Caco-2 (cell line): ENCODE measurements at regions of chr12 and their contacts with region 1.

Region 1: DNA sequence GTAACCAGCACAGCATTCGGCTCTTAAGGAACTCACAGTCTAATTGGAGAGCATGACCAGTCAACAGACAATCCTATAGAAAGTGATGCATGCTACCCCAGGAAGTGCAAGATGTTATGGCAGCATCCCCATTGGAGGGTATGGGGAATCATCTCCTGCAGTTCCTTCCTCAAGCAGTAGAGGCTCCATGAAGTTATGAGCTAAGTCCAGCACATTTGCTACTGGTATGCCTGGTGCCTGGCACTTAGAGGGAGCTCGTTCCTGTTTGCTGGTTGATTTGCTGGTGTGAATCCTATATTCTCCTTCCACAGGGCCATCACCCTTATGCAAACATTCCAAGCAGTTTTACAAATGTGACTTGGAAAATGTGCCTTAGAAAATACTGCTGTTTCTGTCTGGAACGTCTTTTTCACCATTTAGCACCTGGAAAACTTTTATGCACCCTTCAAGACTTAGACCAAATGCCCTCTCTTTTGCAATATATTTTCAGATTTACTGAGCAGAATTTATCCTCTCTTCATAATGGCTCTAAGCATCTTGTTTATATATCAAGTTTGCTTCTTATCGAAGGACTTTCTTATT is 136.1 kb upstream of the WSCD2 start:
- DNase-seq: peak; percentile 66
- H3K4me3 ChIP-seq: no peak overlapping the region
- H3K4me3 Mint-ChIP-seq: no peak overlapping the region
- H3K27ac Mint-ChIP-seq: no peak overlapping the region
- H3K4me1 ChIP-seq: no peaks in the 10 kb centered on the region
- H3K4me1 Mint-ChIP-seq: no peaks in the 10 kb centered on the region
- H3K27me3 ChIP-seq: no peaks in the 10 kb centered on the region
- H3K27me3 Mint-ChIP-seq: peaks cover 21% of the 10 kb centered on the region
- CTCF ChIP-seq: peak; percentile 62 to 73

Region 2: DNA sequence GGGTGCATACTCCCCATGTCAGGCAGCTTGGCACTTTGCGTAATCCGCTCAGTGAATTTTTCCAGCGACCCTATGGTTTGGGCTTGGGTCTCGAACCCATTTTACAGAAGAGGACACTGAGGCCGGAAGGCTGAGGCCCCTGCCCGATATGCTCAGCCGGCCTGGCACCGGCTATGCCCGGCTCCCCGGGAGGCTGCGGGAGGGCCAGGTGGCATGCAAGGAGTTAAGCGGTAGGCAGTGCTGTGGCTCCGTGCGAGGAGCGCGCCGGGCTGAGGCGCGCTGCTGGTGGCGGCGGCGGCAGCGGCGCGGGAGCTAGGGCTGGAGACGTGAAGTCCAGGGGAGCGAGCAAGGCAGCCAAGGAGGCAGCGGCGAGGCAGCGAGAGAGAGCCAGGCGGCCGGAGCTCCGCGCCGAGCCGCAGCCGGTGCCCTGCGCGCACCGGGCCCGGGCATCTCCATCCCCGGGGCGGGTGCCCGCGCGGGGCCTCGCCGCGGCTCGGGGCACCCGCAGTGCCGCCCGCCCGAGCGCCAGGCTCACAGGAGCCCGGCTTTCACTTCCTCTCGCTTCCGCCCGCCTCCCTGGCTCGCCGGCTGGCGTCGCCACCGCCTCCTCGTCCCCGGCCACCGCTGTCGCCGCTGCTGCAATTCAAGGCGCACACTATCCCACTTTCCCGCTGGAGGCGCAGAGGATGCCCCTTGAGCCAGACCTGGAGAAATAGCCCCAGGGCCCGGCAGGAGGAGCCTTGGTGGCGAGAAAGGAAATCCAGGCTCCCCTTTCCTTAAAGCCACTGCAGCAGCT is 136.3 kb after region 1 on chr12 and contains the start of gene WSCD2:
- CTCF ChIA-PET with region 1: no interaction called
- POLR2A ChIA-PET with region 1: no interaction called
- intact Hi-C with region 1: loop called (anchors 2 kb)
- DNase-seq: peak; percentile 78 to 82
- H3K4me3 ChIP-seq: peak within 1 kb of the TSS; percentile 38
- H3K4me3 Mint-ChIP-seq: peak within 1 kb of the TSS; percentile 71
- H3K27ac Mint-ChIP-seq: no peak within 1 kb of the TSS
- H3K4me1 ChIP-seq: no peaks in the 10 kb centered on the region
- H3K4me1 Mint-ChIP-seq: no peaks in the 10 kb centered on the region
- H3K27me3 ChIP-seq: no peaks in the 10 kb centered on the region; the same call in 1 of the 2 replicates
- H3K27me3 Mint-ChIP-seq: peaks cover 21% of the 10 kb centered on the region
- CTCF ChIP-seq: peak; percentile 49 to 65
- total RNA-seq, gene WSCD2: not detected in 2 replicates

Region 3: DNA sequence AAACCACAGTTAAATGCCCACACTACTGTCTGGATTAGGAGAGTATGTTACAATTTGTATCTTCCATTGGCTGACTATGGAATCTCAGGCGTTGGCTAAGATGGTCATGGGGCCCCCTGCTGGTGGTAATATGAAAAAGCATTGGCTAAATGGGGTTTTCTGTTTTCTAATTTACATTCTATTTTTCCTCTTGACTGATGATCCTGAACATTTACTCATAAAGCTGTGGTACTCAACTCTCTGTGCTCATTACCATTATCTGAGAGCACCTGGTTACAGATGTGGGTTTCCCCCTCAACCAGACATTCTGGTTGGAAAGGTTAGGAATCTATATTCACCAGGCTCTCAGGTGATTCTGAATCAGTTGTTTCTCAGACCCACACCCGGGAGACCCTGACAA is 201.0 kb after region 1 on chr12:
- CTCF ChIA-PET with region 1: interaction called, 15 read pairs
- POLR2A ChIA-PET with region 1: no interaction called
- intact Hi-C with region 1: loop called (anchors 1 kb)
- DNase-seq: peak in 1 of 2 experiments; percentile 43
- H3K4me3 ChIP-seq: no peak overlapping the region
- H3K4me3 Mint-ChIP-seq: no peak overlapping the region
- H3K27ac Mint-ChIP-seq: no peak overlapping the region
- H3K4me1 ChIP-seq: no peaks in the 10 kb centered on the region
- H3K4me1 Mint-ChIP-seq: no peaks in the 10 kb centered on the region
- H3K27me3 ChIP-seq: no peaks in the 10 kb centered on the region
- H3K27me3 Mint-ChIP-seq: peaks cover 13% of the 10 kb centered on the region
- CTCF ChIP-seq: peak; percentile 51 to 78

Region 4: DNA sequence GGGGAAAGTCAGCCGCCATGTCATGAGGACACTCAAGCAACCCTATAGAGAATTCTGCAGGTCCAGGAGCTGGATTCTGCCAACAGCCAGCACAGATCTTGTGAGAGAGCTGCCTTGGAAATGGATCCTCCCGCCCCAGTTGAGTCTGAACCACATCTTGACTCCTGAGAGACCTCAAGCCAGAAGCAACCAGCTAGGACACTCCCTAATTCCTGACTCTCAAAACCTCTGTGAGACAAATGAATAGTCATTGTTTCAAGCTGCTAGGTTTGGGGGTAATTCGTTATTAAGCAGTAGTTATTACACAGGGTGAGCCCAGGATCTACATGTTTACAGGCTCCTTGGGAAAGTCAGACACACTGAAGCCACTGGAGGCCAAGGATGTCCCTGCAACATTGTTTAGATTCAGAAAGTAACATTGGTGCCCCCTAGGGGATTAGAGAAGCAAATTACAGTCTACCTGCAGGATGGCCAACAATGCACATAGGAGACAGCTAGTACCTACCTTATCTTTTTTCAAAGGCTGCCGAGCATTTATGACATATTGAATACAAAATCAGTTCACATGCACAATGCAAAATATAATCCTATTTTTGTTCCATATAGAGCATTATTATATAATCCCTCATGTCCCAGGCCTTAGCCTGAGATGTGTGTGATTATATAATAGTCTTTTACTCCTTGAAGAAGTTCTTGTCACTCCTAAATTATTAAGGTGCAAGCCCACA is 464.2 kb after region 1 on chr12:
- CTCF ChIA-PET with region 1: no interaction called
- POLR2A ChIA-PET with region 1: no interaction called
- intact Hi-C with region 1: loop called (anchors 1 kb)
- DNase-seq: peak; percentile 47 to 62
- H3K4me3 ChIP-seq: no peak overlapping the region
- H3K4me3 Mint-ChIP-seq: no peak overlapping the region
- H3K27ac Mint-ChIP-seq: no peak overlapping the region
- H3K4me1 ChIP-seq: no peaks in the 10 kb centered on the region
- H3K4me1 Mint-ChIP-seq: no peaks in the 10 kb centered on the region
- H3K27me3 ChIP-seq: no peaks in the 10 kb centered on the region
- H3K27me3 Mint-ChIP-seq: peaks cover 8% of the 10 kb centered on the region
- CTCF ChIP-seq: peak; percentile 51 to 71

Region 5: DNA sequence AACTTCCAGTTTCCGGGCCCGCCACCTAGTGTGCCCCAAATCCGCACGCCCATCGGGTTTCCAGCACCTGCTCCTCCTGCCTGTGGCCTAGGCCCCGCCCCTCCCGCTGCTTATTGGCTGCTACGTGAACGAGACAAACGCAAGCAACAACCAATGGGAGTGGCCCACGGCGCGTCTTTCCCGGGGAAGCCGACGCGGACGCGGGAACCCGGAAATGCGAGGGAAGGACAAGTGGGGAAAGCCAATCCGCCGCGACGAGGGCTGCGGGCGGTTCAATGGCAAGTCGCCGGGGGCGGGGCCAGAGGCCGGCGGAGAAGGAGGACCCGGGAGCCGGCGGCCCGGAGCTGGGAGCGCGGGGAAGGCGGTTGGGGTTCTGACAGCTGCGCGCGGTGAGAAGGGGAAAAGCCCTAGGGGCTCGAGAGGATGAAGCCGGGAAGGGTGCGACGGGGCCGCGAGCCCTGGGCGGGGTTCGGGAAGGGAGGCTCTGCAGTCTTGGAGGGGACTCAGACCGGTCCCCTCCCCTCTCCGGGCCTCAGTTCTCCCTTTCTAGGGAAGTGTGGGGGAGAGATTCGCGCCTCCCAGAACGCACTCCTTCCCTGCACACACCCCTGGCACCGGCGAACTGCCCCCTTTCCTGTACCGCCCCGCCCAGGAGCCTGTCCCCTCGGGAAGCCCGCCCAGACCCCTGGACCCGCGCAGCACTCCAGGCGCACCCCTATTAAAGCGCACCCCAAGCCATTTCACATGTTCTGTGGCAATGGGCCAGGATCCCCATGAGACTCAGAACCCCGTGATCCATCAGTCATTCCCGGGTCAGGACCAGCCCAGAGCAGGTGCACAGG is 522.2 kb after region 1 on chr12 and contains the start of gene FICD:
- CTCF ChIA-PET with region 1: interaction called, 3 read pairs
- POLR2A ChIA-PET with region 1: no interaction called
- intact Hi-C with region 1: loop called (anchors 1 kb)
- DNase-seq: peak; percentile 99
- H3K4me3 ChIP-seq: peak within 1 kb of the TSS; percentile 77
- H3K4me3 Mint-ChIP-seq: peak within 1 kb of the TSS; percentile 82
- H3K27ac Mint-ChIP-seq: peak within 1 kb of the TSS; percentile 89
- H3K4me1 ChIP-seq: no peaks in the 10 kb centered on the region
- H3K4me1 Mint-ChIP-seq: peaks cover 18% of the 10 kb centered on the region
- H3K27me3 ChIP-seq: no peaks in the 10 kb centered on the region
- H3K27me3 Mint-ChIP-seq: peaks cover 2% of the 10 kb centered on the region
- CTCF ChIP-seq: no peak
- total RNA-seq, gene FICD: 2.8 and 3.6 TPM in 2 replicates